ENCODE measurements at regions of chr19 and their contacts with region 1.

Region 1: DNA sequence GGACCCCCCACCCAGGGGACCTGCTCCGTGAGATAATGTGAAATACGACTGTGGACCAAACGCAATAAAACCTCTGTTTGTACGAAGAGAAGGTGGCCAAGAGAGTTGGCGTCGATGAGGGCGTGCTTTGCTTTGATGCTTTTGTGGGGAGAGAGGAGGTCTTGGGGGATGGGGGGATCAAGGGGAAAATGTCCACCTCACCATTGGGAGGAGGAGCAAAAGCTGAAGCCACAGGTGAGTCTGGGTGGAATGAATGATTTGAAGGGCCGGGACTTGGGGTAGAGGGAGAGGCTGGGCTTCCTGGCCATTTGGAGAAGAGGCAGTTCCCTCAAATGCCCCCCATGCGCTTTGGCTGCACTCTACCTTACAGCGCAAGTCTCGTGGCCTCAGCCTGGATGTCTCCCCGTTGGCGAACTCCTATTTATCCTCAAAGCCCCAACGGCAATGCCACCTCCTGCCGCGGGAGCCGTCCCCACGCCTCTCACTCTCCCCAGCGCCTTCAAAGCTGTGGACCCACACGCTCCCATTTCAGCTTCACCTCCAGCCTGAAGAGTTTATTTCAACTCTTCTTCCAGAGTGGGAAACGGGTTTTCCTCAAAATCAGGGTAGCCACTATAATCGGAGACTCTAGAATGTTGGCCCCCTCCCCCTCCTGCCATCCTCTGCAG is 795 bp upstream of the ABCA7 start:
- DNase-seq: no peak
- ATAC-seq: no peak
- H3K4me3 ChIP-seq: peak overlapping the region; percentile 77
- H3K27ac ChIP-seq: no peak overlapping the region
- H3K4me1 ChIP-seq: peaks cover 16% of the 10 kb centered on the region; the same call in 1 of the 2 replicates
- H3K27me3 ChIP-seq: no peaks in the 10 kb centered on the region
- CTCF ChIP-seq: no peak

Region 2: GRCh38 chr19:1113033-1113985 is 74.2 kb after region 1 on chr19:
- CTCF ChIA-PET with region 1: no interaction called
- POLR2A ChIA-PET with region 1: no interaction called
- intact Hi-C with region 1: no loop called
- DNase-seq: peak; percentile 66
- ATAC-seq: peak; percentile 72
- H3K4me3 ChIP-seq: no peak overlapping the region
- H3K27ac ChIP-seq: no peak overlapping the region
- H3K4me1 ChIP-seq: no peaks in the 10 kb centered on the region
- H3K27me3 ChIP-seq: no peaks in the 10 kb centered on the region
- CTCF ChIP-seq: peak; percentile 66

Region 3: DNA sequence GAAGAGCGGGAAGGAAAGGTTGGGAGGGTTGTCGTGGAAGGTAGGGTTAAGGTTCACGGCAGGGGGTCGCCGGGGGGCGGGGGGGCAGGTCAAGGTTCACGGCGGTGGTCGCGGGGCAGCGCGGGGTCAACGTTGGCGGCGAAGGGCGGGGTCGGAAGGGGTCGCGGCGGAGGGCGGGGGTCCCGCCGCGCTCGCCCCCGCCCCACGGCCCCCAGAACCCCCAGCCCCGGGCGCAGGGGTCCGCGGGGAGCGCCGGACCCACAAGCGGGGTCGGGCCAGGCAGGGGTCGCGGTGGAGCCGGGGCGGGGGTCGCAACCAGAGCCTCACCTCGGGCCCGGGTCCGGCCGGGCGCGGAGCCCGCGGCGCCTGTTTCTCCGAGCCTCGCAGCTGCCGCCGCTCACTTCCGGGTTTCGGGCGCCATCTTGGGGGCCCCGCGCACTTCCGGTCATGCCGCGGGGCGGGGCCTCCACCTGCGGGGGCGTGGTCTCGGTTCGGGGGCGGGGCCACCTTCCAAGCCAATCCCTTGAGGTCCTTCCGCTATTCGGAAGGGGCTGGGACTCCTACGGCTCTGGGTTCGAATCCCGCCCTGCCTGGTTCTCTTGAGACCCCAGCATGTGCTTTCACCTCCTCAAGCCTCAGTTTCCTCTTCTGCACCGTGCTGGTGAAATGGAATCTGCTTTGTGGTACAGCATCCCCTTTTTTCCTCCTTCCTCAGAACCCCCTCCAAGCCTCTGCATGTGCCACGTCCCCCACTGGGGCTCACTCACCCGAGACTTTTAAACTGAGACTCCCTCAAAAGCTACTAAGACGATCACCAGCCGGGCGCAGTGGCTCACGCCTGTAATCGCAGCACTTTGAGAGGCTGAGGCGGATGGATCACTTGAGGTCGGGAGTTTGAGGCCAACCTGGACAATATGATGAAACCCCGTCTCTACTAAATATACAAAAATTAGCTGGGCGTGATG is 135.0 kb after region 1 on chr19 and contains the start of gene SBNO2:
- CTCF ChIA-PET with region 1: no interaction called
- POLR2A ChIA-PET with region 1: interaction called, 16 read pairs
- intact Hi-C with region 1: no loop called
- DNase-seq: peak; percentile 84
- ATAC-seq: peak; percentile 3; the same call in 1 of the 2 replicates
- H3K4me3 ChIP-seq: peak within 1 kb of the TSS; percentile 82
- H3K27ac ChIP-seq: peak within 1 kb of the TSS; percentile 98
- H3K4me1 ChIP-seq: peaks cover 64% of the 10 kb centered on the region
- H3K27me3 ChIP-seq: no peaks in the 10 kb centered on the region
- CTCF ChIP-seq: no peak
- total RNA-seq, gene SBNO2: 62.4 and 75.0 TPM in 2 replicates